GM10248 (cell line): ENCODE measurements at regions of chr12 and their contacts with region 1.

Region 1: GRCh38 chr12:50211392-50212070 is 44.4 kb upstream of the CERS5 start:
- DNase-seq: no peak
- CTCF ChIP-seq: no peak

Region 2: DNA sequence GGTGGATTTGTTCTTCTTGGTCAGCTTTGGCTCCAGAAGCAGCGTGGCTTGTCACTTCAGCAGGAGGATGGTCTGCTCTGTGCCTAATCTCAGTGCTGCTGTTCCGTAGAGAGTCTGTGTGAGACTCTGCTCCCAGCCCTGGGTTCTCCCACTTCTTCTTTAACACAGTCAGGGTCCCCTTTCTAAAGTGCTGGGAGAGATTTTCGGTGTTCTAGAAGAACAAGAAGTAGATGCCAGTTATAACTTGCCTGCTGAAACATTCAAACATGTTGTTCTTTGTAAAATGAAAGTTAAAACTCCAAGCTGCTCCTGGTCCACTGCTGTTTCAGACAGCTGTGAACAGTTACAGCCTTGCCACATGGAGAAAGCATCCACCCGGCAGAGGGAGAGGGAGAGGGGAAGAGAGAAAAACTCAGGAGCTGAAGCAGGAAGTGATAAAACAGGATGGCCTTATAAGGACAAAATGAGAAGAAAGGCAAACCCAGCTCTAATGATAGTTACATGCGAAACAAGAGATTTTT is 10.8 kb after region 1 on chr12:
- CTCF ChIA-PET with region 1: interaction called, 18 read pairs
- POLR2A ChIA-PET with region 1: interaction called, 4 read pairs
- DNase-seq: peak; percentile 50
- CTCF ChIP-seq: no peak

Region 3: DNA sequence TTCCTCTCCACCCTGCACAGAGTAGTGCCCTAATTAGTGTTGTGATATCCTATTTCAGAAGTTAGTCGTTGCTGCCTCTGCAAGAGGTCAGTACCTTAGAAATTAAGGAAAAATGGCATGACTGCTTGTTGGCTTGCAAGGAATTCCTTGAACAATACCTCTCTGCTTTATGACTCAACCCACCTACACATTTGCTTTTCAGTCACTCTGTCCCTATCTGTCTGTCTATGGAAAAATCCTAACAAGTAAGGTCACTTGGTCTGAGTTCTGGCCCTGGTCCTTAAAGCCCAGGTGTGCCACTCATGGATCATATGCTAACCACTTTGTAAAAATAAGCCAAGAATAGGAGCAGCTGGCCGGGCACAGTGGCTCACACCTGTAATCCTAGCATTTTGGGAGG is 435.9 kb after region 1 on chr12:
- CTCF ChIA-PET with region 1: no interaction called
- POLR2A ChIA-PET with region 1: no interaction called
- DNase-seq: no peak
- CTCF ChIP-seq: no peak